ENCODE measurements at regions of chr1 and their contacts with region 1.

Region 1: GRCh38 chr1:35253941-35254340 is 14.6 kb upstream of the ZMYM4 start:
- DNase-seq: no peak
- H3K4me3 ChIP-seq: no peak overlapping the region
- H3K27ac ChIP-seq: no peak overlapping the region
- H3K4me1 ChIP-seq: no peaks in the 10 kb centered on the region
- H3K27me3 ChIP-seq: no peaks in the 10 kb centered on the region
- CTCF ChIP-seq: no peak
- EP300 ChIP-seq: no peak
- POLR2A ChIP-seq: no peak

Region 2: DNA sequence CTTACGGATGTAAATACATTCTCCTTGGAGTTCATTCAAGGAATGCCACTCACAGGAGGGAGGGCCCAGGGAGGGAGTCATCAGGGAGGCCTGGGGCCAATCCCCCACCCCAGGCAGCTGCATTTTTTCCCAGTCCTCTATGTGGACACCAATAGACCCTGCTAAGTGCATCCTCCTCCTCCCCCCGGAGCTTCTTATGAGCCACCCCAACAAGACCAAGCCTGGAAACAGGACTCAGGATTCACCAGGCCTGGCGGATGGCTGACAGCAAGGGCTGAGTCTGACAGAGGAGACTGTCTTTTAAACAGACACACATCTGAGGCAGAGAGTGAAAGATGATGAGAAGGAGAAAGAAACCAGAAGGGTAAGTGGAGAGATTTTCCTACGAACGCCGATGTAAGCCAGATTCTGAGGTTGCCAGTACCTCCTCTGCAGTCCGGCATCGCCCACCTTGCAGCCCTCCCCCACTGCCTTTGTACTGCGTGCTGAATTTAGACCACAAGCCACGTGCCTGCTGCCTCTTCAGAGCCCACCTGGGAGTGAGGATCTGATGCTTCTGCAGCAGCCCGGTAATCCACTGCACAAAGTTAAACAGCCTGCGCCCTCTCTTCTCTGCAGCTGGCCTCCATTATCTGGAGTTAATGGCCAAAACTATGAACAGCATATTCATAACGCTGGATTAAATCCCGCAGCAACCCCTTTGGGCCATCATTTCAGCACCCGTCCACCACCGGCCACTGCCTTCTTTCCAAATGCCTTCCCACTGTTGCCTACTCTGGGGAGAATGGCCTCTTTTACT is 43.4 kb before region 1 on chr1:
- intact Hi-C with region 1: loop called in 1 of 4 experiments (anchors 5 kb)
- DNase-seq: no peak
- H3K4me3 ChIP-seq: no peak overlapping the region
- H3K27ac ChIP-seq: no peak overlapping the region
- H3K4me1 ChIP-seq: peaks cover 6% of the 10 kb centered on the region
- H3K27me3 ChIP-seq: no peaks in the 10 kb centered on the region
- CTCF ChIP-seq: no peak
- EP300 ChIP-seq: no peak
- POLR2A ChIP-seq: no peak

Region 3: GRCh38 chr1:35377555-35377954 is 123.6 kb after region 1 on chr1:
- intact Hi-C with region 1: no loop called
- DNase-seq: no peak
- H3K4me3 ChIP-seq: no peak overlapping the region
- H3K27ac ChIP-seq: no peak overlapping the region
- H3K4me1 ChIP-seq: no peaks in the 10 kb centered on the region
- H3K27me3 ChIP-seq: no peaks in the 10 kb centered on the region
- CTCF ChIP-seq: no peak
- EP300 ChIP-seq: no peak
- POLR2A ChIP-seq: no peak

Region 4: DNA sequence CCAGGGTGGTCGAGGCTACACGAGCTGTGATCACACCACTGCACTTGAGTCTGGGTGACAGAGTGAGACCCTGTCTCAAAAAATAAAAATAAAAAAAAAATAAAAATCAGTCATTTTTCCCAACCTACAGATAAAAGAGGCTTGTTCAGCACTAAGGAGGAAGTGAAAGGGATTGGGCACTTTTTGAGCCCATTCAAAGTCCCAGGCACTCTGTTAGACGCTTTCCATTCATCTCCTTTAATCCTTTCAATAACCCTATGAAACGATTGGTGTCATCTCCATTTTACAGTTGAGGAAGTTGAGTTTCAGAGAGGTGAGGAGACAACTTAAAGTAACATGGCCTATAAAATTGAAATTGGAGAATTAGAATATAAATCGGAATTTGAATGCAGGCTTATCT is 543.4 kb after region 1 on chr1:
- intact Hi-C with region 1: no loop called
- DNase-seq: no peak
- H3K4me3 ChIP-seq: no peak overlapping the region
- H3K27ac ChIP-seq: no peak overlapping the region
- H3K4me1 ChIP-seq: no peaks in the 10 kb centered on the region
- H3K27me3 ChIP-seq: no peaks in the 10 kb centered on the region
- CTCF ChIP-seq: no peak
- EP300 ChIP-seq: no peak
- POLR2A ChIP-seq: no peak

Measured in ovary (tissue), 10 donors.